ENCODE measurements at regions of chr10 and their contacts with region 1.

Region 1: GRCh38 chr10:4649886-4650508 is 176.0 kb upstream of the AKR1E2 start:
- DNase-seq: no peak
- H3K4me3 ChIP-seq: no peak overlapping the region
- H3K27ac ChIP-seq: peak overlapping the region in 12 of 59 donors; percentile 6 to 47 (median 25)
- H3K27me3 ChIP-seq: no peaks in the 10 kb centered on the region
- CTCF ChIP-seq: no peak

Region 2: DNA sequence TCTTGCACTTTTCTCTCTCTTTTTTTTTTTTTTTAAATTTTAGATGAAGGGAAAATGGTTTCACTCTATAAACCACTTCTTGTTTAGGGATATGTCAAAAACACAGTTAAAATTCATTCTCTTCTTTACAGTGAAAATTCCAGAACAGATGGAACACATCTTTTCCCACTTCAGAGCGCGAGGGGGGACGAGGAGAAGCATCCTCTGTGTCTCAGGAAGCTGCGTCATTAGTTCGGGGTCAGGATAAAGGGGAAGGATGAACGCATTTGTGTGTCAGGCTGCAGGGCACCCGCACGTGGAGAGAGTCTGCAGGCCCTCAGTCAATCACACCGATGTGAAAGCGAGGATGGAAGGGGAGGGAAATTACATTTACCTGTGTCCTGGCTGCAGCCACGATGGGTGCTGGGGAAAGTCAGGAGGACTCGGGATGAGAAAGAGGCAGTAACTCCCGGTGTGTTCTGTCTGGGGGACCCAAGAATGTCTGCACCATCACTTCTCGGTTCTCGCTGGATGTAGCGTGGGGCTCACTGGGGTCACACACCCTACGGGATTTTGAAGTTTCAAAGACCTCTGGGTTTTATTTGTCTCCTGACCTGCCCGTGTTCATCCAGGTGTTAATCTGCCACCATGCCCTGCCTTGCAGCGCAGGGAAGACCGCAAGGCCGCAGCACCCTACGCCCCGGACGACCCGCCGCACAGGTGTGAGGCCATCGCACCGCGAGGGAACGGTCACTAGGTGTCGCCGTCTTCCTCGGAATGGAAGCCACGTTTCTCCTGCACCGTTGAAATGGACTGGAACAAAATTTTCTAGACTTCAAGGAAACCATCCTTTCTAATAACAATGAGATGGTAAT is 1410.7 kb before region 1 on chr10:
- intact Hi-C with region 1: loop called (anchors 10 kb)
- DNase-seq: peak in 9 of 10 donors; percentile 34 to 80 (median 71)
- H3K4me3 ChIP-seq: peak overlapping the region in 7 of 59 donors; percentile 2 to 32 (median 19)
- H3K27ac ChIP-seq: no peak overlapping the region
- H3K27me3 ChIP-seq: peaks cover 0 to 25% (median 0%) of the 10 kb centered on the region in 45 donors
- CTCF ChIP-seq: peak; percentile 68 to 97 (median 91)

Region 3: GRCh38 chr10:4183761-4184261 is 466.2 kb before region 1 on chr10:
- intact Hi-C with region 1: no loop called
- DNase-seq: no peak
- H3K4me3 ChIP-seq: no peak overlapping the region
- H3K27ac ChIP-seq: no peak overlapping the region
- H3K27me3 ChIP-seq: no peaks in the 10 kb centered on the region
- CTCF ChIP-seq: no peak

Measured in dorsolateral prefrontal cortex (tissue), 120 donors.